ENCODE measurements at regions of chr2 and their contacts with region 1.

Region 1: DNA sequence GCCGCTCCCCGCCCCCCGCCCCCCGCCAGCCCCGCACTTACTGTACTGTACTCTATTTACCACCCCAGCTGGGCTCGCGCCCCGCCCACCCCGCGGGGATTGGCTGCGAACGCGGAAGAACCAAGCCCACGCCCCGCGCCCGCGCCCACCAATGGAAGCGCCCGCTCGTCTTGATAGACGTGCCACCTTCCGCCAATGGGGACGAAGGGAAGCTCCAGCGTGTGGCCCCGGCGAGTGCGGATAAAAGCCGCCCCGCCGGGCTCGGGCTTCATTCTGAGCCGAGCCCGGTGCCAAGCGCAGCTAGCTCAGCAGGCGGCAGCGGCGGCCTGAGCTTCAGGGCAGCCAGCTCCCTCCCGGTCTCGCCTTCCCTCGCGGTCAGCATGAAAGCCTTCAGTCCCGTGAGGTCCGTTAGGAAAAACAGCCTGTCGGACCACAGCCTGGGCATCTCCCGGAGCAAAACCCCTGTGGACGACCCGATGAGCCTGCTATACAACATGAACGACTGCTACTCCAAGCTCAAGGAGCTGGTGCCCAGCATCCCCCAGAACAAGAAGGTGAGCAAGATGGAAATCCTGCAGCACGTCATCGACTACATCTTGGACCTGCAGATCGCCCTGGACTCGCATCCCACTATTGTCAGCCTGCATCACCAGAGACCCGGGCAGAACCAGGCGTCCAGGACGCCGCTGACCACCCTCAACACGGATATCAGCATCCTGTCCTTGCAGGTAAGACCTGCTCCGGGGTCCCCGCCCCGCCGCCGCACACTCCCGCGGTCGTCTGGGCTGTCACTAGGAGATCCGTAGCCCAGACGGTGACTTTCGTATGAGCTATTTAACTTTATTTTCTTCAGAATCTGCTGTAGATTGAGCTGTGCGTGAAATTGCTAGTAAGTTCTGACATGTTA is at the start of gene ID2:
- DNase-seq: peak; percentile 96 to 99 (median 99)
- ATAC-seq: peak; percentile 83
- H3K4me3 ChIP-seq: peak within 1 kb of the TSS; percentile 89
- H3K4me3 Mint-ChIP-seq: peak within 1 kb of the TSS; percentile 89 to 100 (median 98)
- H3K27ac ChIP-seq: peak within 1 kb of the TSS; percentile 81
- H3K27ac Mint-ChIP-seq: peak within 1 kb of the TSS; percentile 89 to 97 (median 95)
- H3K4me1 ChIP-seq: peaks cover 10 to 24% of the 10 kb centered on the region in 2 donors
- H3K4me1 Mint-ChIP-seq: peaks cover 24 to 49% (median 43%) of the 10 kb centered on the region in 7 donors
- H3K27me3 ChIP-seq: peaks cover 0 to 18% of the 10 kb centered on the region in 2 donors
- H3K27me3 Mint-ChIP-seq: peaks cover 12 to 24% (median 20%) of the 10 kb centered on the region in 5 donors
- total RNA-seq, gene ID2: 43.0 to 185 (median 77.1) TPM

Region 2: DNA sequence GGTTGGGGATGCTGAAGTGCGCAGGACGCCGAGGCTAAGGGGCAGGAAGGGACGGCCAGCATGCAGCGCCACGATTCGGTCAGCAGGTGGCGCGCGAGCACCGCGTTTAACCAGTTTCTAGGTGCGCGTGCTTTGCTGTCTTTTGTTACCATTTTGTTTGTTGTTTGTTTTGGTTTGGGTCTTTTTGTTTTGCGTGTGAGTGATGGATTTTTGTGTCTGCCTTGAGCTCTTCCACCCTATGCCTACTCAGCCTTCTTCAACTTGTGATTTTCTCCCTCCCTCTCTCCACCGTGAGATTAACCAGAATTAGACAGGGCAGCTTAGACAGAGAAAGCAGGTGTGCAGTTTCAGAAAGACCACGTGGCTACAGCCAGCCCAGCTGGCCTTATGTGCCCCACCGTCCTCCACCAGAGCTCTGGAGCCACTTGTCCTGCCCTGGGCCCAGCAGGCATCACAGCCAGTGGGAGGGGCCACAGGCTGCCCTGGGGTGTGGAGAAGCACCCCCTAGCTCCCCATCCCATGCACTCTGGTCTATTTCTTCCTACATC is 1584.6 kb before region 1 on chr2:
- CTCF ChIA-PET with region 1: interaction called, 5 read pairs
- POLR2A ChIA-PET with region 1: interaction called, 4 read pairs
- intact Hi-C with region 1: loop called (anchors 1 kb)
- DNase-seq: peak; percentile 47 to 77 (median 72)
- ATAC-seq: peak; percentile 92
- H3K4me3 ChIP-seq: peak overlapping the region; percentile 56
- H3K4me3 Mint-ChIP-seq: peak overlapping the region; percentile 56 to 82 (median 76)
- H3K27ac ChIP-seq: no peak overlapping the region
- H3K27ac Mint-ChIP-seq: peak overlapping the region in 5 of 9 donors; percentile 22 to 86 (median 45)
- H3K4me1 ChIP-seq: peaks cover 0 to 7% of the 10 kb centered on the region in 2 donors
- H3K4me1 Mint-ChIP-seq: peaks cover 6 to 8% (median 8%) of the 10 kb centered on the region in 7 donors
- H3K27me3 ChIP-seq: no peaks in the 10 kb centered on the region
- H3K27me3 Mint-ChIP-seq: no peaks in the 10 kb centered on the region

Region 3: GRCh38 chr2:7517088-7517487 is 1165.0 kb before region 1 on chr2:
- CTCF ChIA-PET with region 1: no interaction called
- POLR2A ChIA-PET with region 1: interaction called, 8 read pairs
- intact Hi-C with region 1: loop called in 1 of 2 experiments (anchors 2 kb)
- DNase-seq: peak in 7 of 9 donors; percentile 28 to 63 (median 49)
- ATAC-seq: peak; percentile 89
- H3K4me3 ChIP-seq: peak overlapping the region; percentile 12
- H3K4me3 Mint-ChIP-seq: peak overlapping the region; percentile 20 to 82 (median 77)
- H3K27ac ChIP-seq: peak overlapping the region; percentile 35
- H3K27ac Mint-ChIP-seq: peak overlapping the region; percentile 71 to 97 (median 88)
- H3K4me1 ChIP-seq: peaks cover 0 to 16% of the 10 kb centered on the region in 2 donors
- H3K4me1 Mint-ChIP-seq: peaks cover 13 to 68% (median 51%) of the 10 kb centered on the region in 7 donors
- H3K27me3 ChIP-seq: no peaks in the 10 kb centered on the region
- H3K27me3 Mint-ChIP-seq: no peaks in the 10 kb centered on the region

Region 4: GRCh38 chr2:7994397-7994951 is 687.6 kb before region 1 on chr2:
- CTCF ChIA-PET with region 1: no interaction called
- POLR2A ChIA-PET with region 1: no interaction called
- intact Hi-C with region 1: loop called in 1 of 2 experiments (anchors 10 kb)
- DNase-seq: no peak
- ATAC-seq: no peak
- H3K4me3 ChIP-seq: no peak overlapping the region
- H3K4me3 Mint-ChIP-seq: no peak overlapping the region
- H3K27ac ChIP-seq: no peak overlapping the region
- H3K27ac Mint-ChIP-seq: no peak overlapping the region
- H3K4me1 ChIP-seq: no peaks in the 10 kb centered on the region
- H3K4me1 Mint-ChIP-seq: peaks cover 0 to 35% (median 9%) of the 10 kb centered on the region in 7 donors
- H3K27me3 ChIP-seq: no peaks in the 10 kb centered on the region
- H3K27me3 Mint-ChIP-seq: no peaks in the 10 kb centered on the region

Region 5: GRCh38 chr2:8488001-8488738 is 193.9 kb before region 1 on chr2:
- CTCF ChIA-PET with region 1: no interaction called
- POLR2A ChIA-PET with region 1: no interaction called
- intact Hi-C with region 1: loop called in 1 of 2 experiments (anchors 5 kb)
- DNase-seq: peak in 5 of 9 donors; percentile 10 to 56 (median 41)
- ATAC-seq: peak; percentile 91
- H3K4me3 ChIP-seq: peak overlapping the region; percentile 35
- H3K4me3 Mint-ChIP-seq: peak overlapping the region; percentile 38 to 72 (median 64)
- H3K27ac ChIP-seq: no peak overlapping the region
- H3K27ac Mint-ChIP-seq: peak overlapping the region in 7 of 9 donors; percentile 25 to 88 (median 34)
- H3K4me1 ChIP-seq: peaks cover 8 to 53% of the 10 kb centered on the region in 2 donors
- H3K4me1 Mint-ChIP-seq: peaks cover 13 to 57% (median 15%) of the 10 kb centered on the region in 7 donors
- H3K27me3 ChIP-seq: no peaks in the 10 kb centered on the region
- H3K27me3 Mint-ChIP-seq: peaks cover 0 to 8% (median 0%) of the 10 kb centered on the region in 5 donors

Region 6: GRCh38 chr2:8627019-8627691 is 54.9 kb before region 1 on chr2:
- CTCF ChIA-PET with region 1: no interaction called
- POLR2A ChIA-PET with region 1: interaction called, 5 read pairs
- intact Hi-C with region 1: loop called in 1 of 2 experiments (anchors 2 kb)
- DNase-seq: no peak
- ATAC-seq: no peak
- H3K4me3 ChIP-seq: no peak overlapping the region
- H3K4me3 Mint-ChIP-seq: no peak overlapping the region
- H3K27ac ChIP-seq: no peak overlapping the region
- H3K27ac Mint-ChIP-seq: no peak overlapping the region
- H3K4me1 ChIP-seq: no peaks in the 10 kb centered on the region
- H3K4me1 Mint-ChIP-seq: peaks cover 0 to 10% (median 5%) of the 10 kb centered on the region in 7 donors
- H3K27me3 ChIP-seq: no peaks in the 10 kb centered on the region
- H3K27me3 Mint-ChIP-seq: peaks cover 0 to 5% (median 0%) of the 10 kb centered on the region in 5 donors

Region 7: GRCh38 chr2:9356292-9356691 is 674.3 kb after region 1 on chr2:
- CTCF ChIA-PET with region 1: no interaction called
- POLR2A ChIA-PET with region 1: no interaction called
- intact Hi-C with region 1: no loop called
- DNase-seq: no peak
- ATAC-seq: no peak
- H3K4me3 ChIP-seq: no peak overlapping the region
- H3K4me3 Mint-ChIP-seq: no peak overlapping the region
- H3K27ac ChIP-seq: no peak overlapping the region
- H3K27ac Mint-ChIP-seq: no peak overlapping the region
- H3K4me1 ChIP-seq: no peaks in the 10 kb centered on the region
- H3K4me1 Mint-ChIP-seq: no peaks in the 10 kb centered on the region
- H3K27me3 ChIP-seq: no peaks in the 10 kb centered on the region
- H3K27me3 Mint-ChIP-seq: peaks cover 6 to 44% (median 28%) of the 10 kb centered on the region in 5 donors

Region 8: DNA sequence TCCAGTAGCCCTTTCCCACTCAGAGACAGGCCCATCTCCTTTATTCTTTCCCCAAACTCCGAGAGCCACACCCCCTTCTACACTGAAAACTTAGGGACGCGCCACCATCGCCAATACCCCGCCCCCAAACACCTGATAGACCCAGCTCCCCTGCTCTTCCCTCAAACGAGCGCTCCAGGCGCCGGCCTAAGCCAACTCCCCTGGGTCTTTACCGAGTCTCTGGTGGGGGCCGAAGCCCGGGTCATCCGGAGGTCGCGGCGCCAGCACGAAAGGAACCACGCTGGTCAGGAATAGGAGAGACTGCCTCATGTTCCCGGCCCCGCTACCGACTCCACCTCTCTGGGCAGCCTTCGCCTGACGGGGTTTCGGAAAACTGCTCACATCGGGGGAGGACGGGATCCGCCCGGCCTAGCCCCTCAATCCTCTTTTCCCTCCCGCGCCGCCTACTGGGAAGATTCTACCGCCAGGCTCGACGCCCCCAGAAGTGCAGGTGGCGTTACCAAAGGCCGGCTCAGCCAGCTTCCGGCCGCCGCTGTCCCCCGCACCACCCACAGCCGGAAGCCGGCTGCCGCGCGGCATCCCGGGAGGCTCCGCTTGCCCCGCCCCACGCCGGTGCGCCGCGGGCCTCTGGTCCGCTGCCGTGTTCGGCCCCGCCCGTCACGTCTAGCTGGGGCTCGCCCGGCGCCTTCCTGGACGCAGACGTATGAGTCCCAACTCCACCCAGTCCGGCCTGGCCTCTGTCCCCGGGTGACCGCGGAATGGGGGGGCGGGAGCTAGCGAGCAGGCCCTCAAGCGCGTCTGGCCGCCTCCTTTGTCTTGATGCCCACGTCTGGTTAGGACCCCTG is 873.5 kb after region 1 on chr2 and contains the start of gene ADAM17:
- CTCF ChIA-PET with region 1: no interaction called
- POLR2A ChIA-PET with region 1: no interaction called
- intact Hi-C with region 1: loop called in 1 of 2 experiments (anchors 5 kb)
- DNase-seq: peak; percentile 72 to 95 (median 80)
- ATAC-seq: peak; percentile 96
- H3K4me3 ChIP-seq: peak within 1 kb of the TSS; percentile 95
- H3K4me3 Mint-ChIP-seq: peak within 1 kb of the TSS; percentile 90 to 99 (median 96)
- H3K27ac ChIP-seq: peak within 1 kb of the TSS; percentile 97
- H3K27ac Mint-ChIP-seq: peak within 1 kb of the TSS; percentile 66 to 98 (median 96)
- H3K4me1 ChIP-seq: peaks cover 14 to 32% of the 10 kb centered on the region in 2 donors
- H3K4me1 Mint-ChIP-seq: peaks cover 35 to 63% (median 53%) of the 10 kb centered on the region in 7 donors
- H3K27me3 ChIP-seq: no peaks in the 10 kb centered on the region
- H3K27me3 Mint-ChIP-seq: no peaks in the 10 kb centered on the region
- total RNA-seq, gene ADAM17: 22.9 to 45.2 (median 25.9) TPM

Measured in naive thymus-derived CD4-positive, alpha-beta T cell (primary cell).